ENCODE measurements at regions of chr1 and their contacts with region 1.

Region 1: DNA sequence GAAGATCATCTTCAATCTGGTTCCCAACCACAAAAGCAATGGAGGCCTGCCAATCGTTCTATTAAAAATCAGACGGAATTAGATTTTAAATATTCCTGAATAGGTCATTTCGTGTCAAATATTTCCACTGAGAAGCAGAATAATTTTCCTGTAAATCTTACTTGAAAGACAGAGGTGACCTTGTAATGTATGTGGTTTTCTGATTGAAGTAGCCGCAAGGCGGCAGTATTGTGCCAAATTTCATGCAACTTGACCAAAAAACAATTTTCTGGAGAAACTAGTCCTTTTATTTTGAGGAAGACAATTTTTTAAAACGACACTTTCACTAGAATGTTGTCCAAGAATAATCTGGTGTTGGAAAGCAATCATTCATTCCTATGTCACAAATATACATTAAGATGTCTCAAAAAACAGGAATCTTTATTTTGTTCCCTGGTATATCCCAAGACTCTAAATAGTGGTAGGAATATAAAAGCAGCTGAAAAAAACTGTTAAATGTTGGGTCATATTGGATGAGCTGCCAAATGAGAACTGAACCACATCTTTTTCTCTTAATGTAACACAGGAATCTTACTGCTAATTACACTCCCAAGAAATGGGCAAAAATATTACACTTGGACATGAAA is 33.6 kb downstream of the SPAG17 start:
- DNase-seq: peak; percentile 37
- H3K4me3 Mint-ChIP-seq: no peak overlapping the region
- H3K27ac Mint-ChIP-seq: no peak overlapping the region
- H3K4me1 Mint-ChIP-seq: no peaks in the 10 kb centered on the region
- H3K27me3 Mint-ChIP-seq: no peaks in the 10 kb centered on the region
- CTCF ChIP-seq: peak; percentile 40

Region 2: GRCh38 chr1:118113261-118113660 is 38.2 kb before region 1 on chr1:
- CTCF ChIA-PET with region 1: no interaction called
- intact Hi-C with region 1: loop called (anchors 5 kb)
- DNase-seq: no peak
- H3K4me3 Mint-ChIP-seq: no peak overlapping the region
- H3K27ac Mint-ChIP-seq: no peak overlapping the region
- H3K4me1 Mint-ChIP-seq: peaks cover 30% of the 10 kb centered on the region
- H3K27me3 Mint-ChIP-seq: no peaks in the 10 kb centered on the region
- CTCF ChIP-seq: no peak

Region 3: GRCh38 chr1:118716782-118717181 is 565.4 kb after region 1 on chr1:
- CTCF ChIA-PET with region 1: no interaction called
- intact Hi-C with region 1: loop called (anchors 10 kb)
- DNase-seq: no peak
- H3K4me3 Mint-ChIP-seq: no peak overlapping the region
- H3K27ac Mint-ChIP-seq: no peak overlapping the region
- H3K4me1 Mint-ChIP-seq: no peaks in the 10 kb centered on the region
- H3K27me3 Mint-ChIP-seq: no peaks in the 10 kb centered on the region
- CTCF ChIP-seq: no peak

Region 4: DNA sequence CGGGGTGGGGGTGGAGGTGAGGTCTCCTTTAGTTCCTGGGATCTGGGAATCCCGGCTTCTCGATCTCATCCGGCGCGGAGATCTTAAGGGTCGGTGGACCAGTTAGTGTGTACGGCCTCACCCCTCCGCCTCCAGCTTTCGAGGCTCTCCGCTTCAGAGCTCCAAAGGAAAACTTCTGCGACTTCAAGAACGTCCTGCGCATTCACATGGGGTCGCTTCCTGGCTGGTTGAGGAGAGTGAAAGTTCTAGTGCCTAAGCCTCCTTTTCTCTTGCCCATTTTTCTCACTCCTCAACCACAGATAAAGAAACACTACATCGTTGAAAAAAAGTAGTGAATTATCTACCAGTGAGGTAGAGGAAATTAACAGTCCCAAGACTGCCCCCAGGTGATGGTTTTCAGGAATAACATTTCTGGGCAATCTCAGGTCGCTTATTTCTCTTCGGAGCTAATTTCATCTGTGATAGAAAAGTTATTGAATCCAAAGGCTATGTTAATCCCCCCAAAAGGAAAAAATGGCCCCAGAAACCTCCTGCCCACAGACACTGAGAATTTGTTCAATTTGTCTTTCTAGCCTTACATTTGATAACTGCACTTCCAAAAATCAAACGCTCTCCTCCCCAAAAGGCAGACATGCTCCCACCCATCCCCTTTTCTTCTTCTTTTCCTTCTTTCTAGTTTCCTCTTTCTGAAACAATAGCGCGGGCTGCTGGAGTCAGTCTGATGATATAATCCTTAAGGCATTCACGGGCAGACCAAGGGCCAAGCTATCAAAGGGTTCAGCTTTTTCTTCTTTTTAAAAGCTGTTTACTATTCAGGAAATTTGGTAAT is 857.3 kb after region 1 on chr1:
- CTCF ChIA-PET with region 1: no interaction called
- intact Hi-C with region 1: loop called (anchors 2 kb)
- DNase-seq: peak; percentile 58
- H3K4me3 Mint-ChIP-seq: peak overlapping the region; percentile 70
- H3K27ac Mint-ChIP-seq: peak overlapping the region; percentile 72
- H3K4me1 Mint-ChIP-seq: peaks cover 28% of the 10 kb centered on the region
- H3K27me3 Mint-ChIP-seq: peaks cover 35% of the 10 kb centered on the region
- CTCF ChIP-seq: no peak

Region 5: GRCh38 chr1:119275145-119276134 is 1124.0 kb after region 1 on chr1:
- CTCF ChIA-PET with region 1: no interaction called
- intact Hi-C with region 1: loop called (anchors 10 kb)
- DNase-seq: peak; percentile 44
- H3K4me3 Mint-ChIP-seq: no peak overlapping the region
- H3K27ac Mint-ChIP-seq: no peak overlapping the region
- H3K4me1 Mint-ChIP-seq: peaks cover 12% of the 10 kb centered on the region
- H3K27me3 Mint-ChIP-seq: peaks cover 14% of the 10 kb centered on the region
- CTCF ChIP-seq: peak; percentile 61